ENCODE measurements at regions of chr20 and their contacts with region 1.

Region 1: GRCh38 chr20:62550087-62550632 is 74.4 kb upstream of the GATA5 start:
- DNase-seq: peak; percentile 81 to 95
- ATAC-seq: peak; percentile 75 to 84 (median 78)
- H3K4me3 ChIP-seq: peak overlapping the region; percentile 79
- H3K27ac ChIP-seq: peak overlapping the region; percentile 92
- H3K4me1 ChIP-seq: peaks cover 18% of the 10 kb centered on the region
- H3K27me3 ChIP-seq: peaks cover 0 to 5% (median 0%) of the 10 kb centered on the region in 3 donors
- CTCF ChIP-seq: no peak

Region 2: GRCh38 chr20:62536871-62537401 is 13.2 kb before region 1 on chr20:
- intact Hi-C with region 1: loop called in 1 of 2 experiments (anchors 2 kb)
- DNase-seq: peak; percentile 74 to 92
- ATAC-seq: peak; percentile 70 to 75 (median 74)
- H3K4me3 ChIP-seq: no peak overlapping the region
- H3K27ac ChIP-seq: peak overlapping the region; percentile 97
- H3K4me1 ChIP-seq: peaks cover 54% of the 10 kb centered on the region
- H3K27me3 ChIP-seq: no peaks in the 10 kb centered on the region
- CTCF ChIP-seq: no peak

Measured in psoas muscle (tissue), 8 donors.